ENCODE measurements at regions of chr12 and their contacts with region 1.

Region 1: DNA sequence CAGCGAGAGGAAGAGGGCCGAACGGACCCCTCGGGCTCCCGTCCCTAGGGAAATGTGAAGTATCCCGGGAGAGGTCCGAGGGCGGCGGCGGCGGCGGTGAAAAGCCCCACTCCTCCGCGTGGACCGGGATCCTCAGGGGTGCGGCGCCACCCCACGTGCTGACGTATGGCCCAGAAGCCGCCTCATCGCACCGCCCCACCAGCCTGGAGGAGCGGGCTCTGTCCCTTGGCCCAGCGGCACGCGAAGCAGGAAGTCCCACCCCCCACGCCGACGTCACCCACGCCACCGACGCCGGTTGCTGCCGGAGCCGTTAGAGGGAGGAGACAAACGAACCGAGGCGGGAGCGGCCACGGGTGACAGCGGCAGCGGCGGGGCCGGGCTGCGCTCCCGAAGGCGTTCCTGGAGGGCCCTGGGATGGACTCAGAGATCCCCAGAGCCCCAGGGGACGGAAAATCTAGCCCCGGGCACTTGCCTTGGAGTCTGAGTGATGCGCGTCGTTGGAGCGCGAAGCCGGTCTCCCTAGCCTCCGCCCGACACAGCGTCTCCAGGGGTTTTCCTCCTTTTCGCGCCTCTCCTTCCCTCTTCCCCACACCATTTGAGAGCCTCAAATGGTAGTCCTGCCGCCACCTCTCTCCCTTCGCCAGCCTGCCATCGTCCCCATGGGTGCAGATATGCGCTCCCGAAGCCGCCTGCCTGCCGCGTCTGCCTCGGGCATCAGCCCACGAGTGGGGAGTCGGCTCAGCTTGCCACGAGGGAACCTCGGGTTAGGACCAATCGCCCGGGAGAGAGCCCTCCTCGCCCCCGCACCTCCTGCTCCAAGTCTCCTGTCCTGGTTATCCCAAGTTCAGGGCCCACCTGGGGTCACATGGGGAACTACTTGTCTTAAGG is at the start of gene CEP83:
- DNase-seq: peak; percentile 93 to 97 (median 95)
- H3K4me3 ChIP-seq: peak within 1 kb of the TSS; percentile 89 to 98
- H3K4me3 Mint-ChIP-seq: peak within 1 kb of the TSS; percentile 94 to 98 (median 96)
- H3K27ac ChIP-seq: peak within 1 kb of the TSS; percentile 82
- H3K27ac Mint-ChIP-seq: peak within 1 kb of the TSS; percentile 93 to 98 (median 96)
- H3K4me1 ChIP-seq: peaks cover 15% of the 10 kb centered on the region
- H3K4me1 Mint-ChIP-seq: peaks cover 17 to 47% (median 25%) of the 10 kb centered on the region in 4 donors
- H3K27me3 ChIP-seq: no peaks in the 10 kb centered on the region
- H3K27me3 Mint-ChIP-seq: peaks cover 8% of the 10 kb centered on the region in 2 donors
- total RNA-seq, gene CEP83: 11.2 to 14.8 TPM

Region 2: DNA sequence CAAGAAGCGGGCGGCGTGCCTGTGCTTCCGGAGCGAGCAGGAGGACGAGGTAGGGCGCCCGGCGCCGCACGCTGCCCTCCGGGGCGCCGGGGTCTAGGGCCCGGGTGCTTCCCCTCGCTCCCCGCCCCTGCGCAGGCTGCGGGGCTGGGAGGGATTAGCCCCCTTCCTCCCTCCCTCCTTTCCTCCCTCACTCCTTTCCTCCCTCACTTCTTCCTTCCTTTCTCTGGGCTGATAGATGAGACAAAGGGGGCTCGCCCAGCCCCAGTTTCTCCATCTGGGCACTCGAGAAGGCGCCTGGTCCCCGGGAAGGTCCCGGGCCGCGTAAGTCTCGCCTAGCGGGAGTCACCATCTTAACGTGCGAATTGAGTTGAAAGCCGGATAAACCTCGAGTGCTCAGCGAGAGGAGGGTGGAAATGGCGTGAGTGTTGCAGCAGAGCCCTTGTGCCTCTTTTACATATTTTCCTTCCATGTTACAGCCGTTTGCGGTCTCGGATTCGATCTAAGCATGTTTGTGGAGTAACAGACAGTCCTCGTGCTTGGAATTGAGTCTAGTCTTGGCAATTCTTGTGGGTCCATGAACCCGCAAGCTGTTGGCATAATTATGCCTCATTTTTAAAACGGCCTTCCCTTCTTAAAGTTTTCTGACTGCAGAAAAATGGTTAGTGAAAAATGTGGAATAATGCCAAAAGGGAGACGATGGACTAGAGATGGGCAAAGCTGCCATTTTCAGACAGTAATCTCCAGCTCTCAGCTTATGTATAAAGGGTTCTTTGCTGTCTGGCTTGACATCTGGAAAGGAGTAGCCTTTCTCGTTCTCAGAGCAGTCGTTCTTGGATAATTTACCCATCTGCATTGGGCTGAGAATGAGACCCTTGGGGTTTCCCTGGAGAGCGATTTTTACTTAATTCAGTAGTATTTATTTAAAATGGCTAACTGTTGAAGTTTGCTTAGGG is 1081.3 kb before region 1 on chr12:
- CTCF ChIA-PET with region 1: no interaction called
- POLR2A ChIA-PET with region 1: no interaction called
- intact Hi-C with region 1: loop called (anchors 10 kb)
- DNase-seq: peak; percentile 63 to 73 (median 69)
- H3K4me3 ChIP-seq: peak overlapping the region; percentile 71 to 88
- H3K4me3 Mint-ChIP-seq: peak overlapping the region; percentile 98 to 100 (median 99)
- H3K27ac ChIP-seq: peak overlapping the region; percentile 84
- H3K27ac Mint-ChIP-seq: peak overlapping the region; percentile 96 to 100 (median 99)
- H3K4me1 ChIP-seq: peaks cover 43% of the 10 kb centered on the region
- H3K4me1 Mint-ChIP-seq: peaks cover 28 to 57% (median 43%) of the 10 kb centered on the region in 4 donors
- H3K27me3 ChIP-seq: no peaks in the 10 kb centered on the region
- H3K27me3 Mint-ChIP-seq: no peaks in the 10 kb centered on the region

Region 3: DNA sequence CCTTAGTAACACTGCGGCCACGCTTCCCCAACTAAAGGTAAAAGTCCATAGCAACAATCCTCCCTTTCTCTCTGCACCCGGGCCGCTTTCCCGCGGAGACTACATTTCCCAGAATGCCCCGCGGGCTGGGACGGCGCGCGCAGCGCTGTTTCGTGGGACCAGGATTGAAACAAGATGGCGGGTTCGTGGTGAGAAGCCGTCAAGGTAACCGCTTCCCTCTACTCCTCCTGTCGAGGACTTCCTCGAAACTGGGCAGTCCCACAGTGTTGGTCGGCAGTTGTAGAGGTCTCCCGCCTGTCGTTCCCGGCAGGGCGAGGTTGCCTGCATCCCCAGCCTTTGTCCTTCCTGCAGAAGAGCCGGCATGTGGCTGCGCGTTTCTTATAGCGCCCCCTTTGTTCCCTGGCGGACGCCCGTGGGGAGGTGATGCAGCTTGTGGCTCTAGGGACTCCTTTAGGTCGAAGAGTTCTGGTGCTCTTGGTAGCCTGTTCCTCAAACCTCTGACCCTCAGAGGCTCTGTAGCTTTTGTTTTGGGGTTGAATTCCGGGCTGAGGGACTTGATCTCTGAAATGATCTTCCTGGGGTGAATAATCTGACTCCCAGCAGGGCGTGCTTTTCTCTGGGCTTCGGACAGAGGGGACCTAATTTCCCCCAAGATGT is 992.5 kb before region 1 on chr12 and contains the start of gene MRPL42:
- CTCF ChIA-PET with region 1: no interaction called
- POLR2A ChIA-PET with region 1: no interaction called
- intact Hi-C with region 1: loop called (anchors 1 kb)
- DNase-seq: peak; percentile 91 to 96 (median 92)
- H3K4me3 ChIP-seq: peak within 1 kb of the TSS; percentile 72 to 81
- H3K4me3 Mint-ChIP-seq: peak within 1 kb of the TSS; percentile 88 to 95 (median 92)
- H3K27ac ChIP-seq: peak within 1 kb of the TSS; percentile 82
- H3K27ac Mint-ChIP-seq: peak within 1 kb of the TSS; percentile 92 to 99 (median 96)
- H3K4me1 ChIP-seq: peaks cover 28% of the 10 kb centered on the region
- H3K4me1 Mint-ChIP-seq: peaks cover 24 to 38% (median 32%) of the 10 kb centered on the region in 4 donors
- H3K27me3 ChIP-seq: no peaks in the 10 kb centered on the region
- H3K27me3 Mint-ChIP-seq: no peaks in the 10 kb centered on the region
- total RNA-seq, gene MRPL42: 40.1 to 43.2 TPM

Region 4: GRCh38 chr12:94262228-94263010 is 197.6 kb before region 1 on chr12:
- CTCF ChIA-PET with region 1: interaction called, 3 read pairs
- POLR2A ChIA-PET with region 1: interaction called, 8 read pairs
- intact Hi-C with region 1: loop called (anchors 1 kb)
- DNase-seq: peak; percentile 71 to 82 (median 76)
- H3K4me3 ChIP-seq: peak overlapping the region; percentile 40 to 84
- H3K4me3 Mint-ChIP-seq: peak overlapping the region; percentile 95 to 98 (median 97)
- H3K27ac ChIP-seq: peak overlapping the region; percentile 74
- H3K27ac Mint-ChIP-seq: peak overlapping the region; percentile 97 to 99 (median 99)
- H3K4me1 ChIP-seq: peaks cover 28% of the 10 kb centered on the region
- H3K4me1 Mint-ChIP-seq: peaks cover 19 to 56% (median 33%) of the 10 kb centered on the region in 4 donors
- H3K27me3 ChIP-seq: no peaks in the 10 kb centered on the region
- H3K27me3 Mint-ChIP-seq: no peaks in the 10 kb centered on the region

Region 5: GRCh38 chr12:95473884-95474659 is 1014.1 kb after region 1 on chr12 and contains the start of gene METAP2:
- CTCF ChIA-PET with region 1: no interaction called
- POLR2A ChIA-PET with region 1: no interaction called
- intact Hi-C with region 1: loop called (anchors 5 kb)
- DNase-seq: peak; percentile 87 to 92 (median 88)
- H3K4me3 ChIP-seq: peak within 1 kb of the TSS; percentile 83 to 99
- H3K4me3 Mint-ChIP-seq: peak within 1 kb of the TSS; percentile 99 to 100 (median 100)
- H3K27ac ChIP-seq: peak within 1 kb of the TSS; percentile 78
- H3K27ac Mint-ChIP-seq: peak within 1 kb of the TSS; percentile 90 to 100 (median 98)
- H3K4me1 ChIP-seq: peaks cover 50% of the 10 kb centered on the region
- H3K4me1 Mint-ChIP-seq: peaks cover 36 to 64% (median 54%) of the 10 kb centered on the region in 4 donors
- H3K27me3 ChIP-seq: no peaks in the 10 kb centered on the region
- H3K27me3 Mint-ChIP-seq: no peaks in the 10 kb centered on the region
- total RNA-seq, gene METAP2: 50.7 to 52.7 TPM